IMR-90 (cell line): ENCODE measurements at regions of chr4 and their contacts with region 1.

Region 1: DNA sequence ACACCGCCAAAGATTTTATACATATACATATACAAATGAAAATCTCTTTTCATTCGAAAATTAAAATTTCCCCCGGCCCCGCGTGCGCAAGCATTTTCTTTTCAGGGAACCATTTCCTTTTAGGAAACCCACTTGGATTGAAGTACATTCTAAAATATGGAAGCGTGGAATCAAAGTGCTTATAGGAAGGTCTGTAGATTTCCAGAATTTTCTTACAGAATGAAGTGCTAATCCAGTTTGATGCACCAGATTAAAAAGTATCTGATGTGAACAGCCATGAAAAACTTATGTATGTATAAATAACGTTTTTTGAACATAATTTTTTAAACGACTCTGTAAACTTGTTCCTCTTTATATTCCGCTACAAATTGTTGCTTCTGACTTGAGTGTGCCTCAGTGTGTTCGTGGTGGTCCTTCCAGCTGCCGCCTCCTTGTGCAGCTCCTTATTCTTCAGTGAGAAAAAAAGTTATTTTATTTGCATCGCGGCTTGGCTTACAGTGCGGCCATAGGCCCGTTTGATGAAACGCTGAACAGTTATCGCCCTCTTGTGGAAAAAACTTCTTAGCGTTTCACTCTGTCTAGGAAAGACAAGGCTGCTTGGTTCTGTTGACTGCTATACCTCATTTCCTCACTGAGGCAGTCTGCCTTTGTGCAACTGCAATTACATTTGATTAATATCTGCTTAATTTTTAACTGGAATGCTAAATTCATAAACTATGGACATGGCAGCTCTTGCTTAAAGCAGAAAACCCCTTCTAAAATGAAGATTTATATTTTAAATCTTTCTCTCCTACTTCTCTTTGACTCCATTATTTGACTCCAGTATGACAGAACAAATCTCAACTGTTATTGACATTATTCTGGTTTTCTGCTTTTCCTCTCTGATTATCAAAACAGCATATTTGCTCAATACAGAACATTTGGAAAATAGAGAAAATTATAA is 4.7 kb upstream of the NKX6-1 start:
- DNase-seq: peak; percentile 66
- ATAC-seq: peak; percentile 89
- H3K4me3 ChIP-seq: no peak overlapping the region
- H3K27ac ChIP-seq: no peak overlapping the region
- H3K4me1 ChIP-seq: no peaks in the 10 kb centered on the region
- H3K27me3 ChIP-seq: peaks cover 52% of the 10 kb centered on the region
- CTCF ChIP-seq: peak; percentile 72
- POLR2A ChIP-seq: no peak
- RAD21 ChIP-seq: peak; percentile 75

Region 2: GRCh38 chr4:83516042-83516772 is 987.6 kb before region 1 on chr4:
- CTCF ChIA-PET with region 1: no interaction called
- POLR2A ChIA-PET with region 1: no interaction called
- dilution Hi-C with region 1: no loop called
- in situ Hi-C with region 1: loop called (anchors 25 kb)
- intact Hi-C with region 1: no loop called
- DNase-seq: peak; percentile 80
- ATAC-seq: peak; percentile 72
- H3K4me3 ChIP-seq: no peak overlapping the region
- H3K27ac ChIP-seq: no peak overlapping the region
- H3K4me1 ChIP-seq: no peaks in the 10 kb centered on the region
- H3K27me3 ChIP-seq: no peaks in the 10 kb centered on the region; the same call in 1 of the 2 replicates
- CTCF ChIP-seq: no peak
- POLR2A ChIP-seq: no peak
- RAD21 ChIP-seq: no peak

Region 3: GRCh38 chr4:83658806-83659495 is 844.8 kb before region 1 on chr4:
- CTCF ChIA-PET with region 1: no interaction called
- POLR2A ChIA-PET with region 1: no interaction called
- dilution Hi-C with region 1: no loop called
- in situ Hi-C with region 1: loop called (anchors 10 kb)
- intact Hi-C with region 1: no loop called
- DNase-seq: no peak
- ATAC-seq: no peak
- H3K4me3 ChIP-seq: no peak overlapping the region
- H3K27ac ChIP-seq: no peak overlapping the region
- H3K4me1 ChIP-seq: no peaks in the 10 kb centered on the region
- H3K27me3 ChIP-seq: peaks cover 4% of the 10 kb centered on the region
- CTCF ChIP-seq: no peak
- POLR2A ChIP-seq: no peak
- RAD21 ChIP-seq: no peak

Region 4: DNA sequence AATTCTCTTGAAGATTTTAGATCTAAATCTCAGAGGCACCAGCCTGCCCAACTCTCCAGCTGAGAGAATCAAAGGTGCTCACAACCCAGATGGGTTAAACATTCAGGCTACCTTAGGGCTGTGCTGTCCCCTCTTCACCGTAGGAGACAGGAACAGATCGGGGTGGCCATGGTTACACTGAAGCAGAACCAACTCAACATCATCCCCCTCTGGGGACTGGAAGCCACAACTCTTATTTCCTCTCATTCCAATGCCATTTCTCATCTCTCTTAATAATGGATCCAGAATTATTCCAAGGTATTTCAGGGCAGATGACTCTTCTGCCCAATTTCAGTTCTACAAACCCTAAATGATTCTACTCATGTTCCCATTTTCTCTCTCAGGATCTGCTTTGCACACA is 114.4 kb before region 1 on chr4:
- CTCF ChIA-PET with region 1: no interaction called
- POLR2A ChIA-PET with region 1: no interaction called
- dilution Hi-C with region 1: no loop called
- in situ Hi-C with region 1: no loop called
- intact Hi-C with region 1: no loop called
- DNase-seq: no peak
- ATAC-seq: no peak
- H3K4me3 ChIP-seq: no peak overlapping the region
- H3K27ac ChIP-seq: no peak overlapping the region
- H3K4me1 ChIP-seq: no peaks in the 10 kb centered on the region
- H3K27me3 ChIP-seq: no peaks in the 10 kb centered on the region
- CTCF ChIP-seq: no peak
- POLR2A ChIP-seq: no peak
- RAD21 ChIP-seq: no peak